ENCODE measurements at regions of chr1 and their contacts with region 1.

Region 1: GRCh38 chr1:235971571-235972310 is 93.1 kb downstream of the NID1 start:
- DNase-seq: peak; percentile 93
- ATAC-seq: peak; percentile 96
- H3K4me3 ChIP-seq: peak overlapping the region; percentile 40
- H3K27ac ChIP-seq: peak overlapping the region; percentile 95
- H3K4me1 ChIP-seq: peaks cover 14% of the 10 kb centered on the region
- H3K27me3 ChIP-seq: no peaks in the 10 kb centered on the region
- CTCF ChIP-seq: peak; percentile 96
- POLR2A ChIP-seq: peak; percentile 68; the same call in 1 of the 2 replicates
- RAD21 ChIP-seq: peak; percentile 97

Region 2: DNA sequence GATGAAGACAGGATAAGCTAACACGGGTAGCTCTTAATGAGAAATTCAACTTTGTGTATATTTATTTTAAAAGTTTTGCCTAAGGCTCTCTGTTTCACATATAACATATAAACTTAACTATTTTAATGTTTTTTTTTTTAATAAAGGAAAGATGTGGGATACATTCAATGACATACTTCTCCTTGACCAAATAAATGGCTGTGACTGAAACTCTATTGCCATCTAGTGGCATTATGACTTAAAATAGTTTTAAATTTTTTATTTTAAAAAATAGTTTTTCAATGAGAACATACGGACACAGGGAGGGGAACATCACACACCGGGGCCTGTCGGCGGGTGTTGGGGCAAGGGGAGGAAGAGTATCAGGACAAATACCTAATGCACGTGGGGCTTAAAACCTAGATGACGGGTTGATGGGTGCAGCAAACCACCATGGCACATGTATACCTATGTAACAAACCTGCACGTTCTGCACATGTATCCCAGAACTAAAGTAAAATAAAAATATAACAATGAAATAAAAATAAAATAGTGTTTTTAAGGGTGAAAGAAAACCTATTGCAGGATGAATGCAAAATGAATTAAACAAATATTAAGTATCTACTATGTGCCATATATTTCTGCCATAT is 188.5 kb before region 1 on chr1:
- CTCF ChIA-PET with region 1: interaction called, 9 read pairs
- POLR2A ChIA-PET with region 1: no interaction called
- dilution Hi-C with region 1: no loop called
- in situ Hi-C with region 1: no loop called
- intact Hi-C with region 1: loop called (anchors 2 kb)
- DNase-seq: peak; percentile 73
- ATAC-seq: peak; percentile 78
- H3K4me3 ChIP-seq: no peak overlapping the region
- H3K27ac ChIP-seq: no peak overlapping the region
- H3K4me1 ChIP-seq: peaks cover 6% of the 10 kb centered on the region
- H3K27me3 ChIP-seq: no peaks in the 10 kb centered on the region
- CTCF ChIP-seq: peak; percentile 70
- POLR2A ChIP-seq: 0 out of 2 replicates have a peak, but pooled peaks have one; percentile 31
- RAD21 ChIP-seq: peak; percentile 80

Region 3: GRCh38 chr1:235866913-235867845 is 104.6 kb before region 1 on chr1:
- CTCF ChIA-PET with region 1: interaction called, 27 read pairs
- POLR2A ChIA-PET with region 1: interaction called, 5 read pairs
- dilution Hi-C with region 1: no loop called
- in situ Hi-C with region 1: loop called (anchors 5 kb)
- intact Hi-C with region 1: loop called (anchors 1 kb)
- DNase-seq: peak; percentile 90
- ATAC-seq: peak; percentile 97
- H3K4me3 ChIP-seq: peak overlapping the region; percentile 92
- H3K27ac ChIP-seq: peak overlapping the region; percentile 86
- H3K4me1 ChIP-seq: peaks cover 5% of the 10 kb centered on the region; the same call in 1 of the 2 replicates
- H3K27me3 ChIP-seq: no peaks in the 10 kb centered on the region
- CTCF ChIP-seq: no peak
- POLR2A ChIP-seq: peak; percentile 48
- RAD21 ChIP-seq: no peak

Region 4: DNA sequence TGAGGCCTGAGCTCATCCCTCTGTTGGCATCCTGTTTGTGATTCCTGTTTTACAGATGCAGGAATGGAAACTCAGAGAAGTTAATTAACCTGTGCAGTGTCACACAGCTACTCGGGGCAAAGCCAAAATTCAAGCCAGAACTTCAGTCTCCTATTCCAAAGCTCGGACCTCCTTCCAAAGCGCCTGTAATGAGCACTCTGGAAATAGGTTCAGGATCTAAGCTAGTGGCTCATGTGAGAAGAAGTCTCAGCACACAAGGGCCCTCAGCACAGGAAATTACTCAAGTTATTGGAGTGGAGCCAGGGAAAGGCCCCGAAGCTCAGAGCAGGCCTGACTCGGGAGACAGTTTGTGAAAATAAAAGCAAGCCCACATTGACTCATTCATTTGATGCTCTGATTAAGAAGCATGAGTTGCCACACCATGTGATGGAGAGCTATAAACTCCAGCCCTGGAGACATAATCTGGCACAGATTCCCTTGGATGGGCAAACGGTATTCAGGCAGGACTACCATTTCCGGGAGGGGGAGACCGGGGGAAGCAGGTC is 54.4 kb before region 1 on chr1:
- CTCF ChIA-PET with region 1: interaction called, 10 read pairs
- POLR2A ChIA-PET with region 1: interaction called, 3 read pairs
- dilution Hi-C with region 1: no loop called
- in situ Hi-C with region 1: no loop called
- intact Hi-C with region 1: loop called (anchors 5 kb)
- DNase-seq: peak; percentile 99
- ATAC-seq: peak; percentile 89
- H3K4me3 ChIP-seq: no peak overlapping the region
- H3K27ac ChIP-seq: peak overlapping the region; percentile 52
- H3K4me1 ChIP-seq: peaks cover 12% of the 10 kb centered on the region
- H3K27me3 ChIP-seq: no peaks in the 10 kb centered on the region
- CTCF ChIP-seq: no peak
- POLR2A ChIP-seq: no peak
- RAD21 ChIP-seq: no peak

Region 5: GRCh38 chr1:235984041-235984825 is 12.5 kb after region 1 on chr1:
- CTCF ChIA-PET with region 1: interaction called, 12 read pairs
- POLR2A ChIA-PET with region 1: no interaction called
- dilution Hi-C with region 1: no loop called
- in situ Hi-C with region 1: no loop called
- intact Hi-C with region 1: no loop called
- DNase-seq: peak; percentile 90
- ATAC-seq: peak; percentile 89
- H3K4me3 ChIP-seq: no peak overlapping the region
- H3K27ac ChIP-seq: peak overlapping the region; percentile 73
- H3K4me1 ChIP-seq: peaks cover 14% of the 10 kb centered on the region
- H3K27me3 ChIP-seq: no peaks in the 10 kb centered on the region
- CTCF ChIP-seq: no peak
- POLR2A ChIP-seq: no peak
- RAD21 ChIP-seq: no peak

Measured in IMR-90 (cell line).